Left cardiac atrium (tissue), 4 donors: ENCODE measurements at regions of chr19 and their contacts with region 1.

Region 1: DNA sequence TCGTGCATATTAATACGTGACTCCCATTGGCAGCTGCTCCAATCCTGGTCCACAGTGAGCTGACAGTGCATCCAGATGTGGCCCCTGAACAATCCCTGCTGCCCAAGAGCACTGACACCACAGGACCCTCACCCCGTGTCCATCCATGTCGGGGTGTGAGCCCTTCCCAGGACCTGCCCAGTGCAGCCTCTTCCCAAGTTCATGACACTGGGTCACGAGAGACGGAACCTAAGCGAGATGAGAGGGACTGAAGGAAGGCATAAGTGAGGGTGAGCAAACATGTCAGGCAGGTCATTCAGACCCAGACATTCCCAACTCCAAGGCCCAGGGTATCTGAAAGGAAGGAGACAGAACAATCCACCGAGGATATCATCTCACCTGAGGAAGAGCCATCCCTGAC is 3.5 kb downstream of the ZNF468 start:
- DNase-seq: no peak
- ATAC-seq: no peak

Region 2: GRCh38 chr19:52809801-52810200 is 44.1 kb before region 1 on chr19:
- intact Hi-C with region 1: no loop called
- DNase-seq: no peak
- ATAC-seq: no peak

Region 3: GRCh38 chr19:52823676-52824075 is 30.2 kb before region 1 on chr19:
- intact Hi-C with region 1: loop called in 1 of 2 experiments (anchors 2 kb)
- DNase-seq: no peak
- ATAC-seq: no peak

Region 4: GRCh38 chr19:52942386-52943133 is 88.7 kb after region 1 on chr19:
- intact Hi-C with region 1: loop called in 1 of 2 experiments (anchors 10 kb)
- DNase-seq: peak; percentile 92
- ATAC-seq: peak; percentile 99 to 100